RWPE1 (cell line): ENCODE measurements at regions of chr1 and their contacts with region 1.

Region 1: GRCh38 chr1:28877132-28877781 is 37.1 kb upstream of the EPB41 start:
- DNase-seq: peak; percentile 80
- H3K27ac ChIP-seq: no peak overlapping the region
- CTCF ChIP-seq: peak; percentile 85

Region 2: GRCh38 chr1:28642847-28643635 is 234.2 kb before region 1 on chr1 and contains the start of gene TAF12:
- CTCF ChIA-PET with region 1: interaction called, 11 read pairs
- POLR2A ChIA-PET with region 1: interaction called, 3 read pairs
- DNase-seq: peak; percentile 92
- H3K27ac ChIP-seq: peak within 1 kb of the TSS; percentile 93
- CTCF ChIP-seq: peak; percentile 51

Region 3: DNA sequence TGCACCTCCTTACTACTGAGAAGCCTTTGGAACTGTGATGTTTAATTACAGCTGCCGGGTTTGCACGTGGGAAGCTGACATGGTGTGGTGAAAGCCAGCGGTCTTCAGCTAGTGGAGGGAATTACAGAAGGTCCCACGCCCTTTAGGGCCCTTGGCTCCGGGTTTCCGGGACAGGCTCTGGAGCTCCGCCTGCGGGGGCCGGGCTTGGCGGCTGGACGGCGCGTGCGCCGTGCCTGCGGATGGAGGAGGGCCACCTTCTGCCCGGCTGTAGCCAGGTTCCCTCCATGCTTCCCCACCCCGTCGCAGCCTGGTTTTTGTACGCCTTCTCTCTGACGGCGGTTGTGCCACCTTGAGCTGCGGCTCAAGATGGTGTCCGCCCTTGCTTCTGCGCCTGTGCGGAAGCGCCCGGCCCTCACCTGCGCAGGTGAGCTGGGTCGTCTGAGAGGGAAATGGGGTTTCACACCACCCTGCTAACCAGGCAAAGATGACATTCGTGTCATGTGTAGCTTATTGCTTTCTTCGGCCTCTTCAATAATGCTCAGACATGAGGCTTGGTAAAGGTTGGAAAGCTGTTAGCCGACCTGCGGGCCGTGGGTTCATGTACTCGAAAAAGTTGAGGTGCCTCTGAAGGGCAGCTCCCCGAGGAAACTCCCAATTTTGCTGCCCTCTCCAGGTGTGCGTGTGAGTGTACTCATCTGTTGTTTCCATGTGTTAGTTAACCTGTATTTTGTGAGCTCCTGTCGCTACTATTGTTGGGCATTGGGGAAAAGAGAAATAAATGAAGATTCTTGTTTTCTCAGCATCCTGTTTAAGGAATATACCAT is 101.9 kb before region 1 on chr1:
- CTCF ChIA-PET with region 1: interaction called, 15 read pairs
- POLR2A ChIA-PET with region 1: no interaction called
- DNase-seq: peak; percentile 78
- H3K27ac ChIP-seq: peak overlapping the region; percentile 55
- CTCF ChIP-seq: no peak

Region 4: GRCh38 chr1:28782011-28782410 is 95.2 kb before region 1 on chr1:
- CTCF ChIA-PET with region 1: interaction called, 67 read pairs
- POLR2A ChIA-PET with region 1: no interaction called
- DNase-seq: no peak
- H3K27ac ChIP-seq: no peak overlapping the region
- CTCF ChIP-seq: no peak

Region 5: GRCh38 chr1:28792644-28793121 is 84.6 kb before region 1 on chr1:
- CTCF ChIA-PET with region 1: interaction called, 67 read pairs
- POLR2A ChIA-PET with region 1: no interaction called
- DNase-seq: no peak
- H3K27ac ChIP-seq: no peak overlapping the region
- CTCF ChIP-seq: no peak

Region 6: DNA sequence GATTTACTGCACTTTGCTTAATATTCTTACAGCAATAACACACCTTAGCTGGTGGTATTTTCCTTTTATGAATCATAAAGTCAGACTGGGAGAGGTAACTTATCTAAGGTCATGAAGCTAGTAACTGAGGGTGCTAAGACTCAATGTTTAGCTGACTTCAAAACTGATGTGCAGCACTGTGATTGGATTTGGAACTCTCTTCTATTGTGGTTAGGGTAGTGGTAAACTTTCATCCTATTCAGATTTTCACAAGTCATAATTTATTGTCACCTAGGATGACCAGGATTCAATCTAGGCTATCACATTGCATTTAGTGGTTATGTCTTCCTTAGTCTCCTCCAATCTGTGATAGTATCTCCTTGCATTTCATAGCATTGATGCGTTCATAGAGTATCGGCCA is 56.0 kb after region 1 on chr1:
- CTCF ChIA-PET with region 1: no interaction called
- POLR2A ChIA-PET with region 1: no interaction called
- DNase-seq: no peak
- H3K27ac ChIP-seq: no peak overlapping the region
- CTCF ChIP-seq: no peak

Region 7: DNA sequence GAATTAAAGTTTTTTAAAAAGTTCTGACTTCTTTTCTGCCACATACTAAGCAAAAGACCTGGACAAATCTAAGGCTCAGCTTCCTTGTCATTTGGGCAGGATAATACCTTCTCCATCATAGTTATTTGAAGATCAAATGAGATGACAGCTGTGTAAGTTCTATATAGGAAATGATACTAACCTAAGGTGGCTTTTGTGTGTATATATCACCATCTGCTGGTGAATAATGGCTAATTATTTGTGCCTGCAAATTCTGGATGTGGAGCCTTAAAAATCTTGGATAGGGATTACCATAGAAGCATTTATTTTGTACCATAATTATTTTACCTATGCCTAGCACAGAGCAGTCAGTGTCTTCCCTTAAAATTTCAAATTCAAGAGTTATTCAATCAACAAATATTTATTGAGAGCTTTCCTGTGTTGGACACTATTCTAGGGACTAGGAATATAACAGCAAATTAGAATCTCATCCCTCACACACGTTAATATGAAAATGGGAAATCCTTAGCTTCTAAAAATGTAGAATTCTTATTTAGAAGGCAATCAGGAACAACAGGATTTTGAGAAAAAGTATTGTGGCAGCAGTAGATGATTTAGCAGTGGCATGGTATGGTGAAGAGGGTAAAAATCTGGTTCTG is 156.7 kb after region 1 on chr1:
- CTCF ChIA-PET with region 1: interaction called, 74 read pairs
- POLR2A ChIA-PET with region 1: no interaction called
- DNase-seq: peak; percentile 57
- H3K27ac ChIP-seq: no peak overlapping the region
- CTCF ChIP-seq: peak; percentile 61